A549 (cell line): ENCODE measurements at regions of chr17 and their contacts with region 1.

Region 1: GRCh38 chr17:7021993-7022778 is 664 bp upstream of the BCL6B start:
- DNase-seq: peak; percentile 78 to 95
- ATAC-seq: peak; percentile 60 to 83
- H3K4me3 ChIP-seq: no peak overlapping the region
- H3K27ac ChIP-seq: peak overlapping the region; percentile 42 to 71; a peak in 5 of 6 replicates
- H3K4me1 ChIP-seq: peaks cover 24% of the 10 kb centered on the region
- CTCF ChIP-seq: peak; percentile 91
- EP300 ChIP-seq: no peak
- POLR2A ChIP-seq: no peak
- RAD21 ChIP-seq: peak; percentile 82 to 88

Region 2: GRCh38 chr17:6660805-6661463 is 361.3 kb before region 1 on chr17:
- CTCF ChIA-PET with region 1: interaction called, 48 read pairs
- POLR2A ChIA-PET with region 1: no interaction called
- DNase-seq: no peak
- ATAC-seq: no peak
- H3K4me3 ChIP-seq: no peak overlapping the region
- H3K27ac ChIP-seq: no peak overlapping the region
- H3K4me1 ChIP-seq: no peaks in the 10 kb centered on the region
- CTCF ChIP-seq: no peak
- EP300 ChIP-seq: no peak
- POLR2A ChIP-seq: no peak
- RAD21 ChIP-seq: no peak

Region 3: GRCh38 chr17:6872137-6872808 is 149.9 kb before region 1 on chr17:
- CTCF ChIA-PET with region 1: interaction called, 17 read pairs
- POLR2A ChIA-PET with region 1: interaction called, 3 read pairs
- DNase-seq: peak; percentile 90 to 98
- ATAC-seq: peak; percentile 98 to 100
- H3K4me3 ChIP-seq: no peak overlapping the region
- H3K27ac ChIP-seq: peak overlapping the region; percentile 85
- H3K4me1 ChIP-seq: peaks cover 58% of the 10 kb centered on the region
- CTCF ChIP-seq: no peak
- EP300 ChIP-seq: peak; percentile 90; a peak in 3 of 5 replicates
- POLR2A ChIP-seq: no peak
- RAD21 ChIP-seq: peak; percentile 27 to 41; a peak in 2 of 5 replicates

Region 4: GRCh38 chr17:6948562-6948961 is 73.6 kb before region 1 on chr17:
- CTCF ChIA-PET with region 1: no interaction called
- POLR2A ChIA-PET with region 1: no interaction called
- DNase-seq: no peak
- ATAC-seq: no peak
- H3K4me3 ChIP-seq: no peak overlapping the region
- H3K27ac ChIP-seq: no peak overlapping the region
- H3K4me1 ChIP-seq: no peaks in the 10 kb centered on the region
- CTCF ChIP-seq: no peak
- EP300 ChIP-seq: no peak
- POLR2A ChIP-seq: no peak
- RAD21 ChIP-seq: no peak

Region 5: DNA sequence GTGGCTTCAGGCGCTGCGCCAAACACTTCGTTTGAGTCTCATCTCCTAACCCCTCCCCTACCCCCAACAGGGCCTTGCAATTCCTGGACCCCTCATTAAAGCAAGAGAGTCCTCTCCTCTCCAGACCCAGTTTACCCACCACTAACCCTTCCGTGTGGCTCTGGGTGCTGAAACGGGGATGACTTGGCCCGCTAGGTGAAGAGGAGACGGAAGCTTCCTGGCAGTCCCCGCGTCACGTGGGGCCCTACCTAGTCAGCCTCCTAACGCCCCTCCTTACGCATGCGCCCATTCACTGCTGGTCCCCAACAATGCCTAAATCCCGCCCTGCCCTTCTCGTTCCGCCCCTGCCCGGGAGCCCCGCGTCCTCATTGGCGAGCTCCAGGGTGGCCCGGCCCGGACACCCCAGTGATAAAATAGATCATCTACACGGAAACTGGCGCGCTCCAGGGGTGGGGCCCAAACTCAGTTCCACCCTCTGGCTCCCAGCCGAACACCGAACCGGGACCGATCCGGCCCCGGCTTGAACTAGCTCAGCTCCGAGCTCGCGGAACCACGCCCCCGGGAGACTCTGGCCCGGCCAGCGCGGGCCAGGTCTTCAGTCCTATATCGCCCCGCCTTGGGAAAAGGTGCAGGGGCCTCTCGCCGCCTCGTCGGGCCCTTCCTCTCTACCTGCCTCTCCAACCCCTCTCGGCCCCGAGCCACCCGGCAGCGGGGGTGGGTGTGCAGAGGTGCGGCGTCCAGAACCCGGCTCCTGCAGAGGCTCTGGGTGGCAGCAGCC is 13.6 kb after region 1 on chr17 and contains the start of gene SLC16A13:
- CTCF ChIA-PET with region 1: interaction called, 28 read pairs
- POLR2A ChIA-PET with region 1: interaction called, 16 read pairs
- DNase-seq: peak; percentile 99 to 100
- ATAC-seq: peak; percentile 93 to 97
- H3K4me3 ChIP-seq: peak within 1 kb of the TSS; percentile 85
- H3K27ac ChIP-seq: peak within 1 kb of the TSS; percentile 86 to 97
- H3K4me1 ChIP-seq: peaks cover 13% of the 10 kb centered on the region; the same call in 2 of the 3 replicates
- CTCF ChIP-seq: no peak
- EP300 ChIP-seq: no peak
- POLR2A ChIP-seq: peak; percentile 96
- RAD21 ChIP-seq: no peak
- polyA plus RNA-seq, gene SLC16A13: 6.2 and 8.0 TPM in 2 replicates